Activated CD4-positive, alpha-beta T cell treated with anti-CD3 and anti-CD28 coated beads, Interleukin-2, amount 10 ng/mL, durations not matched to agents 24 days and 14 days (primary cell): ENCODE measurements at regions of chr5 and their contacts with region 1.

Region 1: GRCh38 chr5:132064738-132065331 is 4.4 kb downstream of the IL3 start:
- DNase-seq: peak; percentile 95
- H3K4me3 Mint-ChIP-seq: no peak overlapping the region
- H3K27ac Mint-ChIP-seq: peak overlapping the region; percentile 66
- H3K4me1 Mint-ChIP-seq: peaks cover 63% of the 10 kb centered on the region
- H3K27me3 Mint-ChIP-seq: no peaks in the 10 kb centered on the region

Region 2: GRCh38 chr5:131423056-131423455 is 641.8 kb before region 1 on chr5:
- intact Hi-C with region 1: loop called (anchors 5 kb)
- DNase-seq: no peak
- H3K4me3 Mint-ChIP-seq: no peak overlapping the region
- H3K27ac Mint-ChIP-seq: no peak overlapping the region
- H3K4me1 Mint-ChIP-seq: peaks cover 13% of the 10 kb centered on the region
- H3K27me3 Mint-ChIP-seq: no peaks in the 10 kb centered on the region

Region 3: GRCh38 chr5:131796793-131797693 is 267.8 kb before region 1 on chr5 and contains the start of gene FNIP1:
- intact Hi-C with region 1: loop called (anchors 1 kb)
- DNase-seq: peak; percentile 100
- H3K4me3 Mint-ChIP-seq: peak within 1 kb of the TSS; percentile 99
- H3K27ac Mint-ChIP-seq: peak within 1 kb of the TSS; percentile 95
- H3K4me1 Mint-ChIP-seq: peaks cover 30% of the 10 kb centered on the region
- H3K27me3 Mint-ChIP-seq: peaks cover 8% of the 10 kb centered on the region
- total RNA-seq, gene FNIP1: 15.8 and 17.5 TPM in 2 replicates

Region 4: GRCh38 chr5:131986161-131986912 is 78.5 kb before region 1 on chr5:
- intact Hi-C with region 1: no loop called
- DNase-seq: no peak
- H3K4me3 Mint-ChIP-seq: no peak overlapping the region
- H3K27ac Mint-ChIP-seq: no peak overlapping the region
- H3K4me1 Mint-ChIP-seq: peaks cover 11% of the 10 kb centered on the region
- H3K27me3 Mint-ChIP-seq: peaks cover 3% of the 10 kb centered on the region

Region 5: GRCh38 chr5:132019857-132020555 is 44.8 kb before region 1 on chr5:
- intact Hi-C with region 1: loop called (anchors 2 kb)
- DNase-seq: peak; percentile 95
- H3K4me3 Mint-ChIP-seq: peak overlapping the region; percentile 49
- H3K27ac Mint-ChIP-seq: peak overlapping the region; percentile 87
- H3K4me1 Mint-ChIP-seq: peaks cover 45% of the 10 kb centered on the region
- H3K27me3 Mint-ChIP-seq: peaks cover 41% of the 10 kb centered on the region

Region 6: DNA sequence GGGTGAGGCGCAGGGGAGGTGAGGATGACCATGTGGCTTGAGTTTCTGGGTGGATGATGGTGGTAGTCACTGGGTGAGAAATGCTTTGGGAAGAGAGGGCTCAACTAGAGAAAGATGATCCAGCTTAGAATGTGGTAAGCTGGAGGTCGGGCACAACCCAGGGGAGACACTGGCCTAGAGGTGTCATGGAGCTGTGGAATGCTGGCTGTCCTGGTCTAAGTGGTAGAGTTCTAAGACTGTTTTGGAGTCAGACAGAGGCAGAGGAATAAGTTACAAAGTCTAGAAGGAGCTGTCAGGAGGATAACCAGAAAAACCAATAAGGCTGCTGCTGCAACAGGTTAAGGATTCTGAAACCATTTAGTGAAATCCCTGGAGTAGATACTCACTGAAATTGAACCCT is 34.2 kb before region 1 on chr5:
- intact Hi-C with region 1: no loop called
- DNase-seq: no peak
- H3K4me3 Mint-ChIP-seq: no peak overlapping the region
- H3K27ac Mint-ChIP-seq: no peak overlapping the region
- H3K4me1 Mint-ChIP-seq: peaks cover 9% of the 10 kb centered on the region
- H3K27me3 Mint-ChIP-seq: peaks cover 43% of the 10 kb centered on the region

Region 7: DNA sequence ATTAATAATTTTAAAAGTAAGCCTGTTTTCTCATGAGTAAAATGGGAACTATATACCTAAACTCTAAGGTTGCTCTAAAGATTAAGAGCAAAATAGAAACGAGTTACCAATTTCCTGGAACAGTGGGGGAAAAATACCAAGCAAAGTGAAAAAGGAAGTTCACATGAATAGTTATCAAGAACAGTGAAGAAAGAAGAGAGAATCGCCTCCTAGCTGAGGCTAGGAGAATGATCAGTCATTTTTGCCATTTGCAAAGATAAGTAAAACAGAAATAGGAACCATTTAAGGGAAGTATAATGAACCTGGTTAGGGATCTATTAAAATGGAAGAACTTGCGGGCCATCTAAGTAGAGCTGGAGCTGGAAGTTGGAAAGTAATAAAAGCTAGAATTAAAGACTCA is 112.2 kb after region 1 on chr5:
- intact Hi-C with region 1: loop called (anchors 1 kb)
- DNase-seq: no peak
- H3K4me3 Mint-ChIP-seq: peak overlapping the region; percentile 71
- H3K27ac Mint-ChIP-seq: peak overlapping the region; percentile 80
- H3K4me1 Mint-ChIP-seq: peaks cover 33% of the 10 kb centered on the region
- H3K27me3 Mint-ChIP-seq: peaks cover 8% of the 10 kb centered on the region

Region 8: GRCh38 chr5:132369474-132370180 is 304.8 kb after region 1 on chr5 and contains the start of gene SLC22A5:
- intact Hi-C with region 1: loop called (anchors 2 kb)
- DNase-seq: peak; percentile 93
- H3K4me3 Mint-ChIP-seq: peak within 1 kb of the TSS; percentile 81
- H3K27ac Mint-ChIP-seq: peak within 1 kb of the TSS; percentile 63
- H3K4me1 Mint-ChIP-seq: peaks cover 22% of the 10 kb centered on the region
- H3K27me3 Mint-ChIP-seq: no peaks in the 10 kb centered on the region
- total RNA-seq, gene SLC22A5: 4.9 and 5.5 TPM in 2 replicates

Region 9: DNA sequence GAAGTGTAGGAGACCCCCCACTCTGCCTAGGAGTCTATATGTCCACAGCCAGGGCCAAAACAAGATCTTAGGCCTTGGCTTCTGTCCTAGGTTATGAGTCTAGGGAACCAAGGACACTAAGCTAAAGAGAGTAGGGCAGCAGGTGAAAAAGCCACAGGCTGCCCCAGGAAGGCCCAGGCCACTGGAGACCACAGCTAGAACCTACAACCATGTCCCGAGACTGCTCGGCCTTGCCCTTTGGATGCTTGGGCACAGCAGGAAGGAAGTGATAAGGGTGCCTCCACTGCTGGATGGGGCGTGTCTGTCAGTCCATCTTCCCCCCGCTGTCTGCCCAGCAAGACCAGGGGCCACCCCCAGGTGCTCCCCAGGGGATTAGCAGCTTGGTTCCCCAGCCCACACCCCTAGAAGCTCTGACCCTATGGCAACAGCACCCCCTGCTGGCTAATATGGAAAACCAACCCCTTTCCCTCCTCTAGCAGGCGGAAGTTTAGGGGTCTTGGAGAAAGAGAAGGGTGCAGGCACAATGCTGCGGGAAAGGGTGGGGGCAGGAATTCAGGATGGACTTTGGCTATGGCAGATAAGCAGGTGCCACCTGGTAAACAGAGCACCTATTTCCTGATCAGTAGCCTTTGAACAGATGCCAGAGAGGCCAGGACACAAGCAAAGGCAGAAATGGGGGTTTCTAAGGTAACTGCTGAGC is 436.2 kb after region 1 on chr5:
- intact Hi-C with region 1: loop called (anchors 1 kb)
- DNase-seq: peak; percentile 92
- H3K4me3 Mint-ChIP-seq: no peak overlapping the region
- H3K27ac Mint-ChIP-seq: peak overlapping the region; percentile 65
- H3K4me1 Mint-ChIP-seq: peaks cover 43% of the 10 kb centered on the region
- H3K27me3 Mint-ChIP-seq: peaks cover 2% of the 10 kb centered on the region

Region 10: GRCh38 chr5:132576123-132576522 is 511.3 kb after region 1 on chr5:
- intact Hi-C with region 1: no loop called
- DNase-seq: no peak
- H3K4me3 Mint-ChIP-seq: no peak overlapping the region
- H3K27ac Mint-ChIP-seq: peak overlapping the region; percentile 52
- H3K4me1 Mint-ChIP-seq: peaks cover 16% of the 10 kb centered on the region
- H3K27me3 Mint-ChIP-seq: no peaks in the 10 kb centered on the region